Common myeloid progenitor, CD34-positive (primary cell): ENCODE measurements at regions of chr7 and their contacts with region 1.

Region 1: DNA sequence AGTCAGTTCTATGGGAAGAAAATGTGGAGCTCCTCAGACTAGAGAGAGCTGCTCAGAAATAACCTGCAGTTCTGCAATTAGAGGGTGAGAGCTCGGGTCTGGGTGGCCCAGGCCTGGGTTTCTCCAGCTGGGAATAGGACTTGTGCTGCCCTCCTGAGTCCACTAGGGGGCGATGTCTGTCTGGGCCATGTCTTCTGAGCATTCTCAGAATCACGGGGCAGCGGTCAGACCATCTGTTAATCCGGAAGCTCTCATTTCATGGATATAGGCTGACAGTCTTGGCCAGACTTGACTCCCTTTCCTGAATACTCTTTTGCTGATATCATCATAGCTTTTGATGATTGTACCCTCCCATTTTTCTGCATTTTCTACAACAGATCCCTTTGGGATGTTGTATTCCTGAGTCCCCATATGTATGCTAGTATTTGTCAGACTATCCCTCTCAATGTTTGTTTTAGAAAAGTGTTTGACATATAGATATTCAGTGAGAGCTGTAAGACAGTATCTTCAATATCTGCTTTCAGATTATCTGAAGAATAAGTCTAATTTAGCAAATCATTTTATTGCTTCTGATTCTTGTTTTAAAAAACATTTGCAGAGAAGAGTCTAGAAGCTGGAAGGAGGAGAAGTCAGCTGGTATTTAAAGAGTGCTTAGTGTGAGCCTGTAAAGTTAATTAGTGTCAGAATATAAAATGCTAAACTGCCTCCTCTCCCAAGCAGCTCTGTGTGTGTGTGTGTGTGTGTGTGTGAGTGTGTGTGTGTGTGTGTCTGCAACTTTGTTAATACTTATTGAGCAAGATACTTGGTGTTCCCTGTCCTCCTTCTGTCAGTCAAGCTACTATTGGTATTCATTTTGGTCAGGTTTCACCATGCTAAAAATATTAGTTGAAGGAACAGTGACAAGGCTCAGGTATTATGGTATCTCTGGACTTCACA is 38.0 kb downstream of the STARD3NL start:
- DNase-seq: peak; percentile 87 to 95 (median 94)
- H3K4me3 ChIP-seq: peak overlapping the region in 1 of 7 experiments; percentile 18
- H3K27ac ChIP-seq: no peak overlapping the region
- H3K4me1 ChIP-seq: peaks cover 9 to 35% (median 26%) of the 10 kb centered on the region in 4 experiments
- H3K27me3 ChIP-seq: no peaks in the 10 kb centered on the region

Region 2: DNA sequence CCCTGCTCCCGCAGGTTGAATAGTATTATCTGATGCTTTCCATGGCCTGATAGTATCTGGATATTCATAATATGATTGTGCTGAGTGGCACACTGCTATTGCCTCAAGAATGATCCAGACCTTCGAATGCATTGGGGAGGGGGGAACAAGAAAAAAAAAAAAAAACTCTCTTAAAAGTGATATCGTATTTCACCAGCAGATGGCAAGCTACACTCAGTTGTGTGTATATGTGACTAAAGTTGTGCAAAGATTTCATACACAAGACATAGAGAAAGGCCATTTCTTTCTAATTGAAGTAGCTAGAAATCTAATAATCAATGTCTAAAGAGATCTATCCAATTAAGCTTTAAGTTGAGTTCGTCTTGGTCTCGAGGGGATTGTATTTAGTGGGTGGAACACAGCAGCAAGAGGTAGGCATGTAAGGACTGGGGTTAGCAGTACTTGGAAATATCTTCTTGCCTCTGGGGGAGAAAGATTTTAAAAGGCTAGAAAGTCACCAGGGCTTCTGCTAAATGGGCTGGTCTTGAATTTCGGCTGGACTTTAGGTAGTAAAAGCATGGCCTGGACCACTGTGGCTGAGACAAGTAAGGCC is 314.7 kb before region 1 on chr7:
- CTCF ChIA-PET with region 1: interaction called, 83 read pairs
- POLR2A ChIA-PET with region 1: no interaction called
- DNase-seq: peak; percentile 61 to 81 (median 75)
- H3K4me3 ChIP-seq: no peak overlapping the region
- H3K27ac ChIP-seq: no peak overlapping the region
- H3K4me1 ChIP-seq: no peaks in the 10 kb centered on the region
- H3K27me3 ChIP-seq: no peaks in the 10 kb centered on the region

Region 3: DNA sequence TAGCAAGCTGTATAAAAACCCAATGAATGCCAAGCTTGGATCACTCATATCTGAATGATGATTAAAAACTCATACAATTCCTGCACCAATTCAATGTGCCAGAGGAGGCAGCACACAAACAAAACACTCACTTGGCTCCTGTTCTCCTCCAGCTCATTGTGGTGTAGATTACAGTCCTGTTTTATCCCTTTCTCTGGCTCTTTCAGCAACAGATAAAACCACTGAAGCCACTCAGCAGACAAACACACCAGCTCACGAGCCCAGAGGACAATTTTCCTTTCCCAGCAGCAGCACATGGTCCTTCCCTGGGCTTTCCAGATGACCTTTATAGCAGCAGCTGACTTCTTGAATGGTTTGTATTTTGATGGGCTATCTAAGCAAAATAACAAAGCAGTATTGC is 145.3 kb before region 1 on chr7:
- CTCF ChIA-PET with region 1: no interaction called
- POLR2A ChIA-PET with region 1: no interaction called
- DNase-seq: peak; percentile 10 to 25 (median 14)
- H3K4me3 ChIP-seq: no peak overlapping the region
- H3K27ac ChIP-seq: no peak overlapping the region
- H3K4me1 ChIP-seq: no peaks in the 10 kb centered on the region
- H3K27me3 ChIP-seq: no peaks in the 10 kb centered on the region

Region 4: DNA sequence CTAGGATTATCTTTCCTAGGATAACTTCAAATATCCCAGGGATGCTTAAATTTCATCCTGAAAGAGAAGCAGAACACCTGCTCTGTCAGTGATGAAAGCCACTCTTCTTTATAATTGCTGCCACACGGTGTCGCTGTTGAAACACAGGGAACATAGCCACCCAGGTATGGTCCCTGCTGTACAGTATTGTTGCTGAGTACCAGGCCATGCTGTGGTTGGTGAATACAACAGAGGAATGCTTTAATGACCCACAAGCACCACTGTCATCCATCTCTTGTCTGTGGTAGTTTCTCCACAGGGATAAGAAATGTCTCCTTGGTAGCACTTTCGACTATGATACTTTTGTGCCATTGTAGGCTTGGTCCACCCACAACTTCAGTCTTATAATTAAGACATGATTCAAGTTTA is 108.5 kb before region 1 on chr7:
- CTCF ChIA-PET with region 1: interaction called, 48 read pairs
- POLR2A ChIA-PET with region 1: interaction called, 3 read pairs
- DNase-seq: peak; percentile 51 to 71 (median 65)
- H3K4me3 ChIP-seq: no peak overlapping the region
- H3K27ac ChIP-seq: no peak overlapping the region
- H3K4me1 ChIP-seq: peaks cover 0 to 8% (median 7%) of the 10 kb centered on the region in 4 experiments
- H3K27me3 ChIP-seq: no peaks in the 10 kb centered on the region

Region 5: DNA sequence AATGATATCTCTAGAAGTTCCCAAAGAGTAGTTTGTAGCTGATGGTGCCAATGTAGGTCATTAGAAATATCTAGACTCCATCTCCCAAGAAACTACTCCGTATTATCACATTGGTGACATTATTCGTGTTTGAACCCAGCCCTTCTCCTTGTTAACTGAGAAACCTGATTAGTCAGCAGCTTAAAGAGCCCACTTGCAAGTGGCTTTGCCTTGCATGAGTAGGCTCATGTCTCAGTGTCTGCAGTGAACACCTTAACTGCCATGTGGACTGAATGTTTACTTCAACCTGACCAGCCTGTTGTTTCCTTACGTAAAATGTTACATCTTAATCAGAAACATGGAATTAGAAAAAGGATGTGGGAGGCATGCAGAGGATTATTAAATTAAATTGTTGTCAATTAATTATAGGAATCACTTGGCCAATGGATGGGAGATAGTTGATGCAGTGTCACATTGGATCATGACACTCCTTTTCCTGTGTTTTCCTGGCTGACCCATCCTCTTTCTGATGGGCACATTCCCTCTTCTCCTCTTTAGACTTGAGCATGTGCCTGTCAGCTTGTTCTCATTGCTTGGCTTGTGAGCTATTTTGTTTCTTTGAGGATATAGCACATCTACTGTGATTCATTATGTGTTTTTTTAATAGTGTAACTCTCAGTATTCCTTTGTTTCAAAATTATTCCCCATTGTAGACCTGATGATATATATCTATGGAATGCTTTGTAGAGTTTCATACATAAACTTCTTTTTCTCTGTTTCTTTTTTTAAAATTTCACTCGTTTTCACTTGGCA is 20.0 kb before region 1 on chr7:
- CTCF ChIA-PET with region 1: interaction called, 51 read pairs
- POLR2A ChIA-PET with region 1: no interaction called
- DNase-seq: no peak
- H3K4me3 ChIP-seq: no peak overlapping the region
- H3K27ac ChIP-seq: no peak overlapping the region
- H3K4me1 ChIP-seq: peaks cover 2 to 35% (median 15%) of the 10 kb centered on the region in 4 experiments
- H3K27me3 ChIP-seq: no peaks in the 10 kb centered on the region

Region 6: DNA sequence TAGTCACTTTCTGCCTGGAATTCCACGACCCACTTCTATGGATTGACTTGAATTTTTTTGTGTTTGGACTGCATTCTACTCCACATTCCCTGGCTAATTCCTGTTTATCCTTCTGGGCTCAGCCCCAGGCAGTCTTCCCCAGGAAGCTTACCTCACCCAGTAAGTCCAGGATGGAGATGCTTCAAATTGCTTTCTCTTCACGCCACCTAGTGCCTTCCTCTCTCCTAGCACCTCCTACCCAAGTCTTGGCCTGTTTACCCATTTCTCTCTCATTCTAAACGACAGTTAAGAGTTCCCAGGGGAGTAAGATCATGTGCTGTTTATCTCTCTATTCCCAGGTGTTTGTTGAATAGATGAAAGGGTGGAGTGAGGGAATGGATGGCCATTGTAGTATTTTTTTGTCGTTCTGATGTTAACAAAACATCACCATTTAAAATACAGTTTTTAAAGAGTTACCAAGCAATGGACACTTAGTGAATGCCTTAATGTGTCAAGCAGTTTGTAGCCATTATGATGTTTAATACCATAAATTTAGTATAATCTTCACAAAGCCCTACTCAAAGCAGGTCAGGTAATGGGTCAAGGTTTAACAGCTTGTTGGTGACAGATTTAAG is 102.9 kb after region 1 on chr7:
- CTCF ChIA-PET with region 1: interaction called, 56 read pairs
- POLR2A ChIA-PET with region 1: no interaction called
- DNase-seq: peak; percentile 60 to 63 (median 61)
- H3K4me3 ChIP-seq: no peak overlapping the region
- H3K27ac ChIP-seq: no peak overlapping the region
- H3K4me1 ChIP-seq: peaks cover 7 to 45% (median 24%) of the 10 kb centered on the region in 4 experiments
- H3K27me3 ChIP-seq: no peaks in the 10 kb centered on the region

Region 7: GRCh38 chr7:38369816-38370493 is 154.0 kb after region 1 on chr7:
- CTCF ChIA-PET with region 1: interaction called, 80 read pairs
- POLR2A ChIA-PET with region 1: no interaction called
- DNase-seq: peak; percentile 93 to 97 (median 97)
- H3K4me3 ChIP-seq: peak overlapping the region in 2 of 7 experiments; percentile 1 to 39
- H3K27ac ChIP-seq: peak overlapping the region in 1 of 2 experiments; percentile 4
- H3K4me1 ChIP-seq: peaks cover 11 to 41% (median 31%) of the 10 kb centered on the region in 4 experiments
- H3K27me3 ChIP-seq: no peaks in the 10 kb centered on the region